GM18951 (cell line): ENCODE measurements at regions of chr3 and their contacts with region 1.

Region 1: DNA sequence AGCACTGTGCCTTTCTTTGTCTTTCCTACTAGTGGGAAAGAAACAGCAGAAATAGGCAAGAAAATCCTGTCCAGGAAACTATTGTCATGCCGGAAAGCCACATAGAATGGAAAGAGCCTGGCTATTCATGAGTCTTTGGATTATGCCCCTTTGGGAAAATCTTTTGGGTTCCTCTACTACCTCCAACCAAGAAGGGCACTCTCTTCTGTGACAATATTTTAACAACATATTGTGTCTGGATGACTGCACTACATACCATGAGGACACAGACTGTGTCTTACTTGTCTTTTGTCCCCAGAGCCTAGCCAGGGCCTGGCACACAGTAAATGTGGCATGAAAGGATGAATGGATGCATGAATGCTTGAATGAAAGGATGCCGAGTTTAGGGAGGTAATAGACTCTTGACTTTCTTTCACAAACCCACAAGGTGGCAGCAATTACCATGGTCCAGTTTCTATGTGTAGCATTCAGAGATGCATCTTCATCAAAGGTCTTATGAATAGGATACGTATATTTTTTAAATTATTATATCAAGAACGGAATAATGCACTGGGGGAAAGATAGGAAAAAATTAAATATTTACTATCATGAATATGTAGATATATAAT is 30.3 kb downstream of the ARL14 start:
- POLR2A ChIP-seq: no peak

Region 2: GRCh38 chr3:160399125-160400029 is 307.9 kb before region 1 on chr3 and contains the starts of genes IFT80 and SMC4:
- in situ Hi-C with region 1: no loop called
- POLR2A ChIP-seq: peak; percentile 80

Region 3: DNA sequence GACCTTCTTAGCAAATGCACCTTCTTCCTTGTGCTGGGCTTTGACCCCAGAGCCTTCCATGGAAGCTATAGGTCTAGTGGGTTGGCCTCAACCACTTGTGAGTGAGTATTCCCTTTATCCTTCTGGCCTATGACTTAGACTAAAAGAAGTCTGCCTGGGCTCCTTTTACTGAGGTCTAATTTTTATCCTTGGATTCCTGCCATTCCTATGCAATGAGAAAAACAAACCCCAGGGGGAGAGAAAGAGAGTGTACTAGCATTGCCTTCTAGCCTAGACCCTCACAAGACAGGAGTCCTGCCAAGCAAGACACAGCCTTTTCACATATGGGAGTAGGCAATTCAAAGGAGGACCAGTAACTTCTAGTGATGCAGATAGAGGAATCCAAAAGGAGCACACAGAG is 204.1 kb after region 1 on chr3:
- in situ Hi-C with region 1: no loop called
- POLR2A ChIP-seq: no peak

Region 4: GRCh38 chr3:160941885-160942494 is 234.7 kb after region 1 on chr3:
- in situ Hi-C with region 1: loop called (anchors 25 kb)
- POLR2A ChIP-seq: no peak